Naive thymus-derived CD4-positive, alpha-beta T cell (primary cell): ENCODE measurements at regions of chr4 and their contacts with region 1.

Region 1: GRCh38 chr4:38132107-38132673 is 172.0 kb downstream of the PTTG2 start:
- DNase-seq: peak; percentile 13 to 78 (median 67)
- ATAC-seq: peak; percentile 78
- H3K4me3 ChIP-seq: peak overlapping the region; percentile 10
- H3K4me3 Mint-ChIP-seq: peak overlapping the region in 9 of 10 donors; percentile 23 to 78 (median 75)
- H3K27ac ChIP-seq: peak overlapping the region; percentile 21
- H3K27ac Mint-ChIP-seq: peak overlapping the region; percentile 87 to 97 (median 90)
- H3K4me1 ChIP-seq: peaks cover 37 to 56% of the 10 kb centered on the region in 2 donors
- H3K4me1 Mint-ChIP-seq: peaks cover 37 to 73% (median 57%) of the 10 kb centered on the region in 7 donors
- H3K27me3 ChIP-seq: no peaks in the 10 kb centered on the region
- H3K27me3 Mint-ChIP-seq: peaks cover 0 to 2% (median 0%) of the 10 kb centered on the region in 5 donors

Region 2: DNA sequence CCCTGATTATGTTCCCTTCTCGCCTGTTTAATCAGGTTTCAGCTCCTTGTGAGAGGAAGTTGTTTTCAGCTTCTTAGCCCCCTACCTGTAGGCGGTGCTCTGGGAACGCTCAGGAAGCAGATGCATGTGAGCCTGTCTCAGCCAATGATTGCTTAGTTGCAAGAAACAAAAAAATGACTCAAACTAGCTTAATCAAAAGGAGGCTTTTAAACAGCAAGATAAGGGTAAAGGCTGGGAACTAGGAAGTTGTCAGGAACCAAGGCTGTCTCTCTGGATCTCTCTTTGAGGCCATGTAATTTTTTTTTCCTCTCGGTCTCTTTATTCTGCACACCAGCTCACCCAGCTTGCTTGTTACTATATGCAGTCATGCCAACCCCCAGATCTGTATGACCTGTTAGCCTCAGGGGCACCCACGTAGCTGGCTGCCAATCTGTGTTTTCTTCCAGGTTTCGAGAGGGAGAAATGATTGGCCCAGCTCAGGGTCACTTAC is 62.9 kb before region 1 on chr4:
- CTCF ChIA-PET with region 1: no interaction called
- POLR2A ChIA-PET with region 1: interaction called, 4 read pairs
- intact Hi-C with region 1: loop called in 1 of 2 experiments (anchors 2 kb)
- DNase-seq: peak in 6 of 9 donors; percentile 16 to 53 (median 38)
- ATAC-seq: peak; percentile 86
- H3K4me3 ChIP-seq: no peak overlapping the region
- H3K4me3 Mint-ChIP-seq: no peak overlapping the region
- H3K27ac ChIP-seq: no peak overlapping the region
- H3K27ac Mint-ChIP-seq: peak overlapping the region in 1 of 9 donors; percentile 12
- H3K4me1 ChIP-seq: no peaks in the 10 kb centered on the region
- H3K4me1 Mint-ChIP-seq: peaks cover 9 to 29% (median 18%) of the 10 kb centered on the region in 7 donors
- H3K27me3 ChIP-seq: no peaks in the 10 kb centered on the region
- H3K27me3 Mint-ChIP-seq: no peaks in the 10 kb centered on the region

Region 3: GRCh38 chr4:38179690-38180377 is 47.6 kb after region 1 on chr4:
- CTCF ChIA-PET with region 1: interaction called, 6 read pairs
- POLR2A ChIA-PET with region 1: no interaction called
- intact Hi-C with region 1: loop called (anchors 1 kb)
- DNase-seq: peak; percentile 47 to 79 (median 69)
- ATAC-seq: peak; percentile 71
- H3K4me3 ChIP-seq: no peak overlapping the region
- H3K4me3 Mint-ChIP-seq: no peak overlapping the region
- H3K27ac ChIP-seq: no peak overlapping the region
- H3K27ac Mint-ChIP-seq: peak overlapping the region in 6 of 9 donors; percentile 2 to 55 (median 22)
- H3K4me1 ChIP-seq: peaks cover 17 to 21% of the 10 kb centered on the region in 2 donors
- H3K4me1 Mint-ChIP-seq: peaks cover 25 to 53% (median 46%) of the 10 kb centered on the region in 7 donors
- H3K27me3 ChIP-seq: no peaks in the 10 kb centered on the region
- H3K27me3 Mint-ChIP-seq: peaks cover 0 to 28% (median 0%) of the 10 kb centered on the region in 5 donors

Region 4: DNA sequence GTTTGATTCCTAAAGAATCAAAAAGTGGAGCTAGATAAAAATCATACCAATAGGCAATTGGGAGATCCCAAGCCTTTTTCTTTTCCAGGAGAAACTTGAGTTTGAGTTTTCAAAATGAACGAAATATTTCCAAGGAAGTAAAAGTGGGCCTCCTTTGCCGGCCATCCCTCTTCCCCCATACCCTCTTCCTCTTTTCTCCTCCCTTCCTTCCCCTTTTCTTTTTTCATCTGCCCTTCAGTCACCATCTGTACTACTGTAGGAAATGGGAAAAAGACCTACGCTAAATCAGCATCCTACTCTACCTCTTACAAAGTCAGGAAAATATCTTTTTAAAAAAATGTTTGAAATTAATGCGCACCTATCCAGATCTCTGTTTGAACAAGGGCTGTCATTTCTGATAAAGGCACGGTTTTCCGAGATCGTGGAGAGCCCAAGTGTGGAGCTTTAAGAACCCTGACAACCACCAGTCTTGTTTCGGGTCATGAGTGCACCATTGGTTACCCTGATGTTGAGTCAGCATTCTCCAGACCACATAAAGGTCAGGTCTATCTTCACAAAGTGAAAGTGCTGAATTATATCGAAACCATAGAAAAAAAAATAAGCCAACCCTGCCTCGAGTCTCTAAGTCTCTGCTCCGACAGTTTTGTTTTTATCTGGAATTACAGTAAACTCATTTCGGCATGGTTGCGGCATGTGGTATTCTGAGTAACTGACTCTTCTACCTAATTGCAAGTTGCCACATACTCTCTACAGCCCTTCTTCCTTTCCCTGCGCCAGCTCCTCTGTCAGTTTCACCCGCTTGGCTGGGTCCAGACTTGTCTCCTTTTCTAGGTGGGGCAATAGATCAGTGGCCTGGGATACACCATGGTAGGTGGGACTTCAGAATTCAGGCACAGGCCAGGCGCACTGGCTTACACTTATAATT is 391.6 kb after region 1 on chr4:
- CTCF ChIA-PET with region 1: no interaction called
- POLR2A ChIA-PET with region 1: no interaction called
- intact Hi-C with region 1: loop called in 1 of 2 experiments (anchors 1 kb)
- DNase-seq: peak in 1 of 9 donors; percentile 38
- ATAC-seq: peak; percentile 84
- H3K4me3 ChIP-seq: no peak overlapping the region
- H3K4me3 Mint-ChIP-seq: peak overlapping the region in 3 of 10 donors; percentile 20 to 49 (median 38)
- H3K27ac ChIP-seq: no peak overlapping the region
- H3K27ac Mint-ChIP-seq: peak overlapping the region in 4 of 9 donors; percentile 7 to 65 (median 14)
- H3K4me1 ChIP-seq: peaks cover under 1 to 2% of the 10 kb centered on the region in 2 donors
- H3K4me1 Mint-ChIP-seq: peaks cover 22 to 51% (median 33%) of the 10 kb centered on the region in 7 donors
- H3K27me3 ChIP-seq: no peaks in the 10 kb centered on the region
- H3K27me3 Mint-ChIP-seq: peaks cover 0 to 44% (median 0%) of the 10 kb centered on the region in 5 donors

Region 5: GRCh38 chr4:38782452-38783108 is 650.4 kb after region 1 on chr4 and contains the start of gene TLR10:
- CTCF ChIA-PET with region 1: no interaction called
- POLR2A ChIA-PET with region 1: no interaction called
- intact Hi-C with region 1: no loop called
- DNase-seq: peak in 7 of 9 donors; percentile 10 to 56 (median 43)
- ATAC-seq: peak; percentile 79
- H3K4me3 ChIP-seq: no peak within 1 kb of the TSS
- H3K4me3 Mint-ChIP-seq: peak within 1 kb of the TSS in 3 of 10 donors; percentile 3 to 58 (median 49)
- H3K27ac ChIP-seq: no peak within 1 kb of the TSS
- H3K27ac Mint-ChIP-seq: no peak within 1 kb of the TSS
- H3K4me1 ChIP-seq: no peaks in the 10 kb centered on the region
- H3K4me1 Mint-ChIP-seq: peaks cover 0 to 7% (median 6%) of the 10 kb centered on the region in 7 donors
- H3K27me3 ChIP-seq: no peaks in the 10 kb centered on the region
- H3K27me3 Mint-ChIP-seq: peaks cover 0 to 8% (median 0%) of the 10 kb centered on the region in 5 donors
- total RNA-seq, gene TLR10: 0.13 to 1.6 (median 0.58) TPM in 4 of 5 experiments, not detected in the other

Region 6: DNA sequence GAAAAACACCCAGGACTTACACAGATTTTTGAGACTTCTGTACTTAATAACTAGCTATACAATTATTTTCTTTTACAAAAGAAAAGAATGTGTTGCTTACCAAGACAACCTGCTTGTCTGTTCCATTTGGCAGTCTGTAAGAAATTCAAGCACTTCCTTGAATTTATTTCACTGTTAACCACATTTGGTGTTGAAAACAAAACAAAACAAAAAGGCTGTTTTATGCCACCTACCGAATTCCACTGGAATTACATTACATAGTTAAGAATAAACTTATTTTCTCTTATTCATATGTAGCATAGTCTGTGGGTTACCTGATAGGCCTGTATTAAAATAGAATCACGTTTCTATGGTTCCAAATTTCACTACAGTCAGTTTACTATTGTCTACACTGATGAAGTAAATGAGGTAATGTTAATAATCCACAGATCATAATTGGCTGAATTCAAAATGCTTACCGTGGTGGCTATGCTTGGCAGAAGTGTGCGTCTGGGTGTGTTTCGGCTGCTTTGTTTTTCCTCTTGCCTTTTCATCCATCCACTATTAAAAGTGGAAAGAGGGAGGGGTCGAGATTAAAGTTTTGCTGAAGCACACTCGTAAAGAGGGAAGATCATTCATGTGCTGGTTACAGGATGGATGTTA is 672.6 kb after region 1 on chr4 and contains the start of gene TLR1:
- CTCF ChIA-PET with region 1: no interaction called
- POLR2A ChIA-PET with region 1: no interaction called
- intact Hi-C with region 1: loop called in 1 of 2 experiments (anchors 2 kb)
- DNase-seq: peak in 7 of 9 donors; percentile 50 to 76 (median 65)
- ATAC-seq: peak; percentile 88
- H3K4me3 ChIP-seq: peak within 1 kb of the TSS; percentile 51
- H3K4me3 Mint-ChIP-seq: peak within 1 kb of the TSS; percentile 87 to 95 (median 90)
- H3K27ac ChIP-seq: peak within 1 kb of the TSS; percentile 61
- H3K27ac Mint-ChIP-seq: peak within 1 kb of the TSS; percentile 87 to 99 (median 94)
- H3K4me1 ChIP-seq: peaks cover 8 to 12% of the 10 kb centered on the region in 2 donors
- H3K4me1 Mint-ChIP-seq: peaks cover 27 to 46% (median 39%) of the 10 kb centered on the region in 7 donors
- H3K27me3 ChIP-seq: no peaks in the 10 kb centered on the region
- H3K27me3 Mint-ChIP-seq: peaks cover 0 to 2% (median 0%) of the 10 kb centered on the region in 5 donors
- total RNA-seq, gene TLR1: 11.8 to 41.9 (median 17.7) TPM

Region 7: GRCh38 chr4:39181905-39182638 is 1049.9 kb after region 1 on chr4 and contains the start of gene WDR19:
- CTCF ChIA-PET with region 1: no interaction called
- POLR2A ChIA-PET with region 1: no interaction called
- intact Hi-C with region 1: loop called in 1 of 2 experiments (anchors 5 kb)
- DNase-seq: peak; percentile 91 to 98 (median 98)
- ATAC-seq: peak; percentile 98
- H3K4me3 ChIP-seq: peak within 1 kb of the TSS; percentile 91
- H3K4me3 Mint-ChIP-seq: no peak within 1 kb of the TSS
- H3K27ac ChIP-seq: peak within 1 kb of the TSS; percentile 72
- H3K27ac Mint-ChIP-seq: peak within 1 kb of the TSS in 4 of 9 donors; percentile 8 to 47 (median 21)
- H3K4me1 ChIP-seq: peaks cover 3 to 12% of the 10 kb centered on the region in 2 donors
- H3K4me1 Mint-ChIP-seq: peaks cover 0 to 12% (median 9%) of the 10 kb centered on the region in 7 donors
- H3K27me3 ChIP-seq: no peaks in the 10 kb centered on the region
- H3K27me3 Mint-ChIP-seq: peaks cover 0 to 16% (median 3%) of the 10 kb centered on the region in 5 donors
- total RNA-seq, gene WDR19: 14.0 to 44.3 (median 15.4) TPM